GM18951 (cell line): ENCODE measurements at regions of chr12 and their contacts with region 1.

Region 1: GRCh38 chr12:31406345-31406744 is 80.4 kb upstream of the SINHCAF start:
- POLR2A ChIP-seq: no peak

Region 2: DNA sequence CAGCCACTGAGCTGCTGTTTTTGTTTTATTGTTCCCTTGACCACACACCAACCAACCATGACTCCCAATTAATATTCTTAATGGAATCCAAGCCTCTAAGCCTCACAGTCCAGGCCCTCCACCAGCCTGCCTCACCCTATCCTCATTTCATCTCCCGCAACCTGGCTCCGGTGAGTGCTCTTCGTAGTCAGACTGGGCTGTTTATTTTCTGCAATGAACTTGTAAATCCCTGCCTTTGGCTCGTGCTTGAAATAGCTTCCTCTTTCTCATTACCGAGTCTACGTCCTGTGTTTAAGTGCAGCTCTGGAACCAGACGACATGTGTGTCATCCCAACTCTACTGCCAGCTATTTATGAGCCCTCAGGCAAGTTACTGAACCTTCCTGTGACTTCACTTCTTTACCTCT is 240.7 kb after region 1 on chr12:
- in situ Hi-C with region 1: loop called (anchors 5 kb)
- POLR2A ChIP-seq: no peak

Region 3: DNA sequence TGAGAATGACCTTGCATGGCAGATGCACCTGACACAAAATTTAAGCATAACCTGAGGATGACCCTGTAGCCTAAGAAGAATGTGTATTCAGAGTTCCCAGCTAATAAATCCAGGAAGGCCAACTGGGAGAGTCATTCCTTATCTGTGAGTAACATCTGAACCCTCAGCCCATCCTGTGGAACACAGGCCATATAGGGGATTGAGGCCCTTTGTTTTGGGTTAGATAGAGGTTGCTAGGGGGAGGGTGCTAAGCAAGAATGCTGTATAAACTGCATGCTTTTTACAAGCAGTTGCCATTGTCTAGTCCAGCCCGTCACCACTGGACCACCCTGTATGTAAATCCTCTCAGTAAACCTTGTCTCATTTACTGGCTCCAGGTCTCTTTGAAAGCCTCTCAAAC is 777.3 kb after region 1 on chr12:
- in situ Hi-C with region 1: no loop called
- POLR2A ChIP-seq: no peak

Region 4: DNA sequence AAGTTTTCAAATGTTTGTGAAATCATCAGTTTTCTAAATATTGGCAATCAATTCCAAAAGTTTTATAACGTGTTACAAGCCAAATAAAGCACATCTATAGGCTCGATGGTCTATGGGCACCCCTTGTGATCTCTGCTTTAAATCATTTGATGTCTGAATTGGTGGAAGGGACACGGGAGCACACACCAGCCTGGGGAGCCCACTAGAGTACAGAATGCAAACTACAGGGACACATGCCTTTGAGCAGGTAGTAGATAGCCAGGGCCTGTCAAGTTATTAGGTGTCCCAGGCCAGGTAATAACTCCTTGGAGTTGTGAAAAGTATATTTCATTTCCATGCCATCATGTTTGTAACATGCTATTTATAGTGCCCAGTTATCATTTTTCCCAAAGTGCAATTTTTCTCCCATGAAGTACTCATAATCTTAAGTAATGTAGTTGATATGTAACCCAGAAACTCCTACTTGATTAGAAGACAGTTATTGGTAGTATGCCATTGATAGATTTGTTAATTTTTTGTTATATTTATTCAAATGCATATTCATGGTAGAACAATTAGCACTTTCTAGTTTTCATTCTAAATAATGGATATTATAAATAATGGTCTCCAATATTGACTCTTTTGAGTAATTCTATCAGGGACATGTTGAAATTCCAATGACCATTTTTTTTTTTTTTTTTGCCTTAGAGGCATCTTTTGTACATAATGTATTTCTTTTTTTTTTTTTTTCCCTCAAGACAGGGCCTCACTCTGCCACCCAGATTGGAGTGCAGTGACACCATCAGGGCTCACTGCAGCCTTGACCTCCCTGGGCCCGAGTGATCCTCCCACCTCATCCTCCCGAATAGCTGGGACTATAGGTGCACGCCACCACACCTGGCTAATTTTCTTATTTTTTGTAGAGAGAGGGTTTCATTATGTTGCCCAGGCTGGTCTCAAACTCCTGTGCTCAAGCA is 896.2 kb after region 1 on chr12:
- in situ Hi-C with region 1: loop called (anchors 25 kb)
- POLR2A ChIP-seq: no peak